T-cell (primary cell): ENCODE measurements at regions of chr5 and their contacts with region 1.

Region 1: GRCh38 chr5:151750121-151750520 is 8.3 kb downstream of the ATOX1 start:
- DNase-seq: no peak
- ATAC-seq: no peak
- H3K4me3 ChIP-seq: no peak overlapping the region
- H3K4me3 Mint-ChIP-seq: no peak overlapping the region
- H3K27ac ChIP-seq: peak overlapping the region; percentile 65
- H3K27ac Mint-ChIP-seq: peak overlapping the region in 1 of 2 donors; percentile 44
- H3K4me1 ChIP-seq: peaks cover 17 to 33% of the 10 kb centered on the region in 2 experiments
- H3K4me1 Mint-ChIP-seq: peaks cover 42 to 56% (median 47%) of the 10 kb centered on the region in 3 donors
- H3K27me3 ChIP-seq: no peaks in the 10 kb centered on the region
- H3K27me3 Mint-ChIP-seq: no peaks in the 10 kb centered on the region

Region 2: GRCh38 chr5:151499501-151500035 is 250.6 kb before region 1 on chr5:
- CTCF ChIA-PET with region 1: no interaction called
- POLR2A ChIA-PET with region 1: interaction called in 1 of 2 experiments, 15 read pairs
- DNase-seq: no peak
- ATAC-seq: no peak
- H3K4me3 ChIP-seq: no peak overlapping the region
- H3K4me3 Mint-ChIP-seq: no peak overlapping the region
- H3K27ac ChIP-seq: no peak overlapping the region
- H3K27ac Mint-ChIP-seq: no peak overlapping the region
- H3K4me1 ChIP-seq: peaks cover 0 to 6% of the 10 kb centered on the region in 2 experiments
- H3K4me1 Mint-ChIP-seq: peaks cover 5 to 8% (median 5%) of the 10 kb centered on the region in 3 donors
- H3K27me3 ChIP-seq: no peaks in the 10 kb centered on the region
- H3K27me3 Mint-ChIP-seq: no peaks in the 10 kb centered on the region